A549 (cell line): ENCODE measurements at regions of chr10 and their contacts with region 1.

Region 1: DNA sequence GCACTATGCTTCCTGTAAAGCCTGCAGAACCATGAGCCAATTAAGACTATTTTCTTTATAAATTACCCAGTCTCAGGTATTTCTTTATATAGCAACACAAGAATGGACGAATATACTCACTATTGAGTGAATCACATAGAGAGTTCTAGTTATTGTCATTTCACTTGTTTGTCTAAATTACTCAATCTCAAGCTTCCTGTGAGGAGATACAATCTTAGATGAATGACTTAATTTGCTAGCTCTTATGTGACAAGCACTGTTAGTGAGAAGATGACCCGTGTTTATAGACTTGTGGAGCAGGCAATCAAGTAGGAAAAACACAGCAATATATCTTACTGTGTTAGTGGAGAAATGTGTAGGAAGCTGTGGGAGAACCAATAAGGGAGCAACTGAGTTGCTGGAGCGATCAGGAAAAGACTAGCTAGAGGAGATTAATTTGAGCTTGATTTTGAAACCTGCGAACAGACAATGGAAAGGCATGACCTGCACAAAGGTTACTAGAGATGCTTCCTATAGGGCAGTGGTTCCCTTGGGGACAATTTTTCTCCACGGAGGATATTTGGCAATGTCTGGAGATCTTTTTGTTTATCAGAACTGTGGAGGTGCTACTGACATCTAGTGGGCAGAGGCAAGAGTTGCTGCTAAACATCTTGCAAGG is 481.1 kb downstream of the SH2D4B start:
- DNase-seq: peak; percentile 20 to 70
- ATAC-seq: peak; percentile 90 to 93
- H3K4me3 ChIP-seq: no peak overlapping the region
- H3K27ac ChIP-seq: no peak overlapping the region
- H3K4me1 ChIP-seq: no peaks in the 10 kb centered on the region
- CTCF ChIP-seq: peak; percentile 68
- EP300 ChIP-seq: no peak
- POLR2A ChIP-seq: no peak
- RAD21 ChIP-seq: peak; percentile 51 to 58

Region 2: DNA sequence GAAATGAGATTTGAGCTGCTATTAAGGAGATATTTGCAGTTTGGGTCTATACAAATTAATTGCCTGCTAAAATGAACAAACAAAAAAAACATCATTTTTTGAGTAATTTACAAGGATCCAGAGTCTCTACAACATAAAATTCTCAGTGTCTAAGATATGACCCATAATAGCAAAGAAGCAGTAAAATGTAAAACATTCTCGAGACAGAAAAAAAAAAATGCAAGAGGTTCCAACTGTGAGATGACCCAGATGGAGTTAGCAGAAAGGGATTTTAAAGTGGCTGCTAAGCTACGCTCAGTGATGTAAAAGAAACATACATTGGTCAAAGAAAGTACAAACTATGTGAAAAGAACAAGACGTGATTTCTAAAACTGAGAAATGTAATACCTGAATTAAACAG is 10.1 kb before region 1 on chr10:
- CTCF ChIA-PET with region 1: interaction called, 25 read pairs
- POLR2A ChIA-PET with region 1: no interaction called
- DNase-seq: no peak
- ATAC-seq: no peak
- H3K4me3 ChIP-seq: no peak overlapping the region
- H3K27ac ChIP-seq: no peak overlapping the region
- H3K4me1 ChIP-seq: no peaks in the 10 kb centered on the region
- CTCF ChIP-seq: no peak
- EP300 ChIP-seq: no peak
- POLR2A ChIP-seq: no peak
- RAD21 ChIP-seq: no peak

Region 3: DNA sequence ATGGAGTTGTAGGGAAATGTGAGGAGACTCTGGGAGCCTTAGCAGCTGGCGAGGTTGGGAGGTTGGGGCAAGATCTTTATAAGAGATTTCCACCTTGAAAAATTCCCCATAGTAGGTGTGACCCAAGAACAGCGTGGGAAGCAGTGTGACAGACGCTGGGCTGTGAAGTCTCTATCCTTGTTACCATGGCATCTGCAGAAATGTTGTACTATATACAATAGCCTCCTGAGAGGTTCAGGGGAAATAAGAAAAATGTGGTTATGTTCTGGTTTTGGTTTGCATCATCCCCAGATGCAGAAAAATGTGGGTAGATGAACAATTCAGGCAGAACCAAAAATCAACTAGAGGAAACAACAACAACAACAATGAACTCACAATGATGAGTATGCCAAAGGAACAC is 17.4 kb after region 1 on chr10:
- CTCF ChIA-PET with region 1: no interaction called
- POLR2A ChIA-PET with region 1: no interaction called
- DNase-seq: no peak
- ATAC-seq: no peak
- H3K4me3 ChIP-seq: no peak overlapping the region
- H3K27ac ChIP-seq: no peak overlapping the region
- H3K4me1 ChIP-seq: no peaks in the 10 kb centered on the region
- CTCF ChIP-seq: no peak
- EP300 ChIP-seq: no peak
- POLR2A ChIP-seq: no peak
- RAD21 ChIP-seq: no peak